ENCODE measurements at regions of chr2 and their contacts with region 1.

Region 1: DNA sequence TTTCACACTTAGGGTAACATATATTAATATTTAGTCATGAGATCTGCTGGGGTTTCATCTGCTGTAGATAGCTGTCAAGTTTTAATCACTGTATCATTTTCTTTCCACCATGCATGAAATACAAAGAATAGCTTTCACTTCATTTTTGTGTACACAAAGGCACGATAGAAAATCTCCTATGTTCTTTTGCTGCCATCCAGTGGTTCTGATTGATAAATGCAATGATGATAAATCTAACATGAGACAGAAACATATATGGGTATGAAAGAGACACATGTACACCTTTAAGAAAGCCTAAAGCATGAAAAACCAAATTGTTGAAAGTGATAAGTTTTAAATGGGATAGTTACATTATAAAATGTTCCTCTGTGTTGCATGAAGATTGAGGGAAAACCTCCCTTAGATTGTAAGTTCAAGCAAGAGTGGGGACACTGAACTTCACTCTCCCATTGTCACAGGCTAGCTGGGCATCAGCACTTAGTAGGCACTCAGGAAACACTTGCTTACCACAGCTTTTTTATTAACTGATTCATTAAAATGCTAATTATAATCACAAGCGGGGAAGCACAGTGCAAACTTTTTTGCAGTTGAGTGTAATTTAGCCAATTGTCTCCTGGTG is 31.2 kb downstream of the C1D start:
- DNase-seq: no peak
- H3K4me3 ChIP-seq: no peak overlapping the region
- H3K27ac ChIP-seq: no peak overlapping the region
- H3K4me1 ChIP-seq: no peaks in the 10 kb centered on the region
- H3K27me3 ChIP-seq: no peaks in the 10 kb centered on the region
- CTCF ChIP-seq: peak; percentile 82

Region 2: GRCh38 chr2:67733517-67733916 is 298.1 kb before region 1 on chr2:
- CTCF ChIA-PET with region 1: no interaction called
- POLR2A ChIA-PET with region 1: no interaction called
- intact Hi-C with region 1: loop called (anchors 5 kb)
- DNase-seq: peak; percentile 5 to 28
- H3K4me3 ChIP-seq: no peak overlapping the region
- H3K27ac ChIP-seq: no peak overlapping the region
- H3K4me1 ChIP-seq: no peaks in the 10 kb centered on the region
- H3K27me3 ChIP-seq: peaks cover 15% of the 10 kb centered on the region; the same call in 1 of the 2 replicates
- CTCF ChIP-seq: peak; percentile 43; the same call in 1 of the 2 replicates

Region 3: DNA sequence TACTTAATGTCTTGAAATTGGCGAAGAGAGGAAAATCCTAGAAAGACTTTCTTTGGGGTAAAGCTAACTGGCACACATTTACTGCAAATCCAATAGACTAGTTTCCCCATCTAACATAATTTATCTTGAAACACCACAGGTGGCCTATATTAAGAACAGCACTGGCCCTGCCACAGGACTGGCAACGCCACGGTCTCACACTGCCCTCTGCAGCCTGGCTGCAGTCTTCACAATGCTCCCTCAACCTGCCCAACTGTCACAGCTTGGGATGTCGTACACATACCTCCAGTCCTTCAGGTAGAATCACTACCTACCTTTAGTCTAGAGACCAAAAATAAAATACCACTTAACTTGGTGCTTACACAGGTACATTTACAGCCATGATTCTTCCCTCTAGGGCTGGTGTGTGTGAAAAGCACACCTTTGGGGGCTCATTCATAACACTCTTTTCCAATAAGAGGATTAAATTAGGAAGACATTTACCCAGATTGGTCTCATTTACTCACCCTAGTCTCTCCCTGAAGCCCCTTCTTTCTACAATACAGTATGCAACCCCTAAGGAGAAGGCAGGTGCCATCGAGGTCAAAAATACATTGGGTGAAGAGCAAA is 191.1 kb before region 1 on chr2:
- CTCF ChIA-PET with region 1: no interaction called
- POLR2A ChIA-PET with region 1: no interaction called
- intact Hi-C with region 1: loop called (anchors 1 kb)
- DNase-seq: peak in 1 of 2 experiments; percentile 65
- H3K4me3 ChIP-seq: no peak overlapping the region
- H3K27ac ChIP-seq: no peak overlapping the region
- H3K4me1 ChIP-seq: no peaks in the 10 kb centered on the region
- H3K27me3 ChIP-seq: 0 out of 2 replicates have a peak, but pooled peaks cover 4% of the 10 kb centered on the region
- CTCF ChIP-seq: peak; percentile 75

Region 4: GRCh38 chr2:67846370-67847070 is 185.1 kb before region 1 on chr2:
- CTCF ChIA-PET with region 1: interaction called, 3 read pairs
- POLR2A ChIA-PET with region 1: no interaction called
- intact Hi-C with region 1: loop called (anchors 2 kb)
- DNase-seq: peak; percentile 79 to 82
- H3K4me3 ChIP-seq: peak overlapping the region; percentile 25; the same call in 1 of the 2 replicates
- H3K27ac ChIP-seq: no peak overlapping the region
- H3K4me1 ChIP-seq: peaks cover 7% of the 10 kb centered on the region; the same call in 1 of the 2 replicates
- H3K27me3 ChIP-seq: 0 out of 2 replicates have a peak, but pooled peaks cover 4% of the 10 kb centered on the region
- CTCF ChIP-seq: peak; percentile 86

Region 5: DNA sequence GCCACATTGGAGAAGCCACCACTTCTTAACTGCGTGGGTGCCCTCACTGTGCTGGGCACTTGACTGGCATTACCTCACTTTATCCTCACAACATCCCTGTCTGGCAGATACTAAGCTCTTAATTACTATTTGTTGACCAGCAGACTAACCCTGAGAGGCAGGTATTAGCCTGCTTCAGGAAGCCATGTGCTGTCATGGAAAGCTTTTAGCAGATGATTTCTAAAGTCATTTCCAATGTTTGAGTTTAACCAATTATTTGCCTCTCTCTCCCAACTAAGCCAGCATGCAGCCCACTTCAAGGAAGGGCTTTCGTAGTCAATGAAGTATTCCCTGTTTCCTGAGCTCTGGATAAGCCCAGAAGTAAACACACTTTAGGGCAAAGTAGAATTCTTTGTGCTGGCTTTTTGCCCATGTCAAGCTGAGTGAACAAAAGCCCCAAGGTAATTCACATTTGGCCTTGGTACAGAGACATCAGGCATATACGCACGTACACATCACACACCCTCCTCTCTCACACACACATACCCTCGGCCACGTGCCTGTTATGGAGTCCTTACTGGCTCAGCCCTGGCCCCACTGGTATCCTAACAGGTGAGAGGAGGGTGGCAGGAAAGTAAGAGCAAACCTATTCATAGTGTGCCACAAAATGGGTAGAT is 77.4 kb before region 1 on chr2:
- CTCF ChIA-PET with region 1: no interaction called
- POLR2A ChIA-PET with region 1: no interaction called
- intact Hi-C with region 1: no loop called
- DNase-seq: no peak
- H3K4me3 ChIP-seq: no peak overlapping the region
- H3K27ac ChIP-seq: no peak overlapping the region
- H3K4me1 ChIP-seq: no peaks in the 10 kb centered on the region
- H3K27me3 ChIP-seq: 0 out of 2 replicates have a peak, but pooled peaks cover 5% of the 10 kb centered on the region
- CTCF ChIP-seq: no peak

Region 6: DNA sequence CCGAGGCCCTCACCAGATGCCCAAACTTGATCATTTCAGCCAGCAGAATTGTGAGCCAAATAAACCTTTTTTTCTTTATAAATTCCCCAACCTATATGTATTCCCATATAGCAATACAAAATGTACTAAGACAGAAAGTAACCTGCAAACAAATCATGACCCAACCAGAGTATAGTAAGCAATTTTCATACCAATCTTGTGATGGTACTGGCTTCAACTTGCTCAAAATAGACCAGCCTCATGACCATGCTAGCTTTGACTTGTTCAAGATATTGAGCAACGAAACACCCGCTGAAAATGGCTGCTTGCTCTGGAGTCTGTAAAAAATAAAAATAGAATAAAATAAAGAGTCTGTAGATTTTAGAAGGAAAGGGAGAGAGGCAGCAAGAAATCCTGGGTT is 66.4 kb before region 1 on chr2:
- CTCF ChIA-PET with region 1: no interaction called
- POLR2A ChIA-PET with region 1: no interaction called
- intact Hi-C with region 1: no loop called
- DNase-seq: no peak
- H3K4me3 ChIP-seq: no peak overlapping the region
- H3K27ac ChIP-seq: no peak overlapping the region
- H3K4me1 ChIP-seq: no peaks in the 10 kb centered on the region
- H3K27me3 ChIP-seq: no peaks in the 10 kb centered on the region
- CTCF ChIP-seq: no peak

Region 7: GRCh38 chr2:68044099-68044498 is 12.4 kb after region 1 on chr2:
- CTCF ChIA-PET with region 1: no interaction called
- POLR2A ChIA-PET with region 1: no interaction called
- intact Hi-C with region 1: no loop called
- DNase-seq: no peak
- H3K4me3 ChIP-seq: no peak overlapping the region
- H3K27ac ChIP-seq: no peak overlapping the region
- H3K4me1 ChIP-seq: no peaks in the 10 kb centered on the region
- H3K27me3 ChIP-seq: no peaks in the 10 kb centered on the region
- CTCF ChIP-seq: no peak